ENCODE measurements at regions of chr3 and their contacts with region 1.

Region 1: DNA sequence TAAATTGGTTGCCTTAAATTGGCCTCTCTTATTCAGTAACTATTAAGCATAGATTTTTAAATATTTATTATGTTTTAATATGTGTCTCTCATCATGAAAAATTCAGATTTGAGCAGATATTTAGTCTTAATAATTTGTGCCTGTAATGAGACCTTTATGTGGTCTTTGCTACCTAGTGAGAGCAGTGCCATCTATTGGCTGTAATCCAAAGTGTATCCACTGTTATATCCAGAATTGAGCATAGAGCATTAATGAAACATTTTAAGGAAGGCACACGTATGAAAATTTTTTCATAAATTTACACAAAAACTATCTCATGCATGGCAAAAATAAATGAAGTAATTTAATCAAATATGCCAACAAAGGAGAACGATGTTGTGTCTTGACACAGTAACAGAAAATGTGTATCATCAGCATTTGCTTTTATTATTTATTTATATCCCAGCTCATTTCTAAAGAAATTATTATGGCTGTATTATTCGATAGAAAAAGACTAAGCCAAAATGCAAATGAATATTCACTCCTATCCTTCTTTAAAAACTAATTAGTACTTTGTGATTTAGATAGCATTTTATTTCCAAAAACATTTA is 203.5 kb downstream of the RSRC1 start:
- DNase-seq: peak; percentile 29
- H3K4me3 Mint-ChIP-seq: no peak overlapping the region
- H3K27ac Mint-ChIP-seq: no peak overlapping the region
- H3K4me1 Mint-ChIP-seq: no peaks in the 10 kb centered on the region
- H3K27me3 Mint-ChIP-seq: no peaks in the 10 kb centered on the region
- CTCF ChIP-seq: peak; percentile 42

Region 2: DNA sequence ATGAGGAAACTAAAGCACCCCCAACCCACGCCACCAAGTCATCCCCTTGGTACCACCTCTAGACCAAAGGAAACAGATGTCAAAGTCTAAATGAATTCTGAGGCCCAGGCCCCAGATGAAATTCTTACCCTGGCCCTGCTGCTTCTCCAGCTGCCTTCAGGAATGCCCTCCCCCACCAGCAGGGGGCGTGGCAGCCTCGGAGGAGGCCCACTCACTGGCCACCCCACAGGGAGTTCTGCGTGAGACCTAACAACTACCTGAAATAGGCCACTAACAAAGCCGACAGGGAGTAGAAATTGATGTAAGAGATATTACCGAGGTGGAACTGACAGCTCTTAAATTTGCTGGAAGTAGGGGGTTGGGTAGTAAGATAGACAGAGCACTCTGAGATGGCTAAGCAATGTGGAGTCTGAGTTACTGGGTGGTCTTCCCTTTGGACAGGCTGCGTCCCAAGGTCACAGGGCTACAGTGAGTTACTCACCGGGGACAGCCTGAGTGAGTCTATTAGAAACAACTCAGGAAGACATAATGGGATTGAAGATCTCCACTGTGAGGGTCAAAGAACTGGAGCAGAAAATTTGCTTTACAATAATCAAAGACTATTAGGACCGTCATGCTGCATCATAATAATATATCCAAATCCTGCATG is 448.0 kb before region 1 on chr3:
- CTCF ChIA-PET with region 1: interaction called, 3 read pairs
- intact Hi-C with region 1: loop called (anchors 2 kb)
- DNase-seq: peak; percentile 88
- H3K4me3 Mint-ChIP-seq: no peak overlapping the region
- H3K27ac Mint-ChIP-seq: no peak overlapping the region
- H3K4me1 Mint-ChIP-seq: no peaks in the 10 kb centered on the region
- H3K27me3 Mint-ChIP-seq: peaks cover 14% of the 10 kb centered on the region
- CTCF ChIP-seq: peak; percentile 89

Region 3: GRCh38 chr3:157876556-157876955 is 436.9 kb before region 1 on chr3:
- CTCF ChIA-PET with region 1: no interaction called
- intact Hi-C with region 1: no loop called
- DNase-seq: no peak
- H3K4me3 Mint-ChIP-seq: no peak overlapping the region
- H3K27ac Mint-ChIP-seq: no peak overlapping the region
- H3K4me1 Mint-ChIP-seq: no peaks in the 10 kb centered on the region
- H3K27me3 Mint-ChIP-seq: peaks cover 17% of the 10 kb centered on the region
- CTCF ChIP-seq: no peak

Region 4: DNA sequence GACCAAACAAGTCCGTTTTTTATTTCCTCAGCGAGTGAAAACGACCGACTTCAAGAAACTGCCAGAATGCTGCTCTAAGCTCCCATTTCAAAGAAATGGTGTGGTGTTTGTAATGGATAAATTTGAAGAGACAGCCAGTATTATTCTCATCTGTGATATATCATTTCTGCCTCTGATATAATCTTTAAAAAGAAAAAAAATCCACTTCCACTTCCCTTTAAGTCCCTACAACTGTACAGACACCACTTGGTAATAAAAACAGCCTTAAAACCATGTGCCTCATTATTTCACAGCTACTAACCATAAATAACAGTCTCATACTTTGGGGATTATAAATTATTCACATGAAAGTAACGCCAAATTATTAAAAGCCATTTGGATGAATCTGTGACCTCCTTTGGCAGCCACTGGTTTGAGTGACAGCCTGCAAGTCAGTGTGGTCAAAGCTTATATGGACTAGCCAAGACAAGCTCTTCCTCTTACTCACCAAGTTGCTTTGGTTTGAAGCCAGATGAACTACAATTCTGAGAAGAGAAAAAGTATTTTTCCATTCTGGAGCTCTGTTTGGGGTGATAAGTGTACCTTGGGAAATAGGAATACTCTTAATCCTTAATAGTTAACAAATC is 375.2 kb before region 1 on chr3:
- CTCF ChIA-PET with region 1: no interaction called
- intact Hi-C with region 1: loop called (anchors 10 kb)
- DNase-seq: no peak
- H3K4me3 Mint-ChIP-seq: no peak overlapping the region
- H3K27ac Mint-ChIP-seq: no peak overlapping the region
- H3K4me1 Mint-ChIP-seq: no peaks in the 10 kb centered on the region
- H3K27me3 Mint-ChIP-seq: no peaks in the 10 kb centered on the region
- CTCF ChIP-seq: no peak

Region 5: GRCh38 chr3:158103081-158103886 is 210.1 kb before region 1 on chr3:
- CTCF ChIA-PET with region 1: no interaction called
- intact Hi-C with region 1: loop called (anchors 5 kb)
- DNase-seq: peak; percentile 39
- H3K4me3 Mint-ChIP-seq: peak overlapping the region; percentile 81
- H3K27ac Mint-ChIP-seq: peak overlapping the region; percentile 26
- H3K4me1 Mint-ChIP-seq: peaks cover 32% of the 10 kb centered on the region
- H3K27me3 Mint-ChIP-seq: peaks cover 21% of the 10 kb centered on the region
- CTCF ChIP-seq: no peak

Region 6: DNA sequence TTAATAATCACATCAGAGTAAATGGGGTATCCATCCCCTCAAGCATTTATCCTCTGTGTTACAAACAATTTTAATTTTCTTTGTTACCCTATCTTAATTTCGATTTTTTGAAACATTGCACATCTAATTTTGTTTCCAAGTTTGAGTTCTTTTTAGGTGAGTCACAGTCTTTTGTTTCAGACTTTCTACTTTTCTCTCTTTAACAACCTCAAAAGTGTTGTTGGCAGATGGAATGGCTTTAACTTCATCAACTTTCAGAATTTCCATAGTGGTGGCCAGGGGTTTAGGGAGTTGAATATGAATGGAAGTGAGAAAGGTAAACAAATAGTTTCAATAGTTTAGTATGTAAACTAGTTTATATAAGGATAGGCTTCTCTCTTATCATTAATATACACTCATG is 34.5 kb after region 1 on chr3:
- CTCF ChIA-PET with region 1: no interaction called
- intact Hi-C with region 1: no loop called
- DNase-seq: no peak
- H3K4me3 Mint-ChIP-seq: no peak overlapping the region
- H3K27ac Mint-ChIP-seq: no peak overlapping the region
- H3K4me1 Mint-ChIP-seq: no peaks in the 10 kb centered on the region
- H3K27me3 Mint-ChIP-seq: no peaks in the 10 kb centered on the region
- CTCF ChIP-seq: no peak

Measured in Calu3 (cell line).